MCF 10A (cell line): ENCODE measurements at regions of chr2 and their contacts with region 1.

Region 1: DNA sequence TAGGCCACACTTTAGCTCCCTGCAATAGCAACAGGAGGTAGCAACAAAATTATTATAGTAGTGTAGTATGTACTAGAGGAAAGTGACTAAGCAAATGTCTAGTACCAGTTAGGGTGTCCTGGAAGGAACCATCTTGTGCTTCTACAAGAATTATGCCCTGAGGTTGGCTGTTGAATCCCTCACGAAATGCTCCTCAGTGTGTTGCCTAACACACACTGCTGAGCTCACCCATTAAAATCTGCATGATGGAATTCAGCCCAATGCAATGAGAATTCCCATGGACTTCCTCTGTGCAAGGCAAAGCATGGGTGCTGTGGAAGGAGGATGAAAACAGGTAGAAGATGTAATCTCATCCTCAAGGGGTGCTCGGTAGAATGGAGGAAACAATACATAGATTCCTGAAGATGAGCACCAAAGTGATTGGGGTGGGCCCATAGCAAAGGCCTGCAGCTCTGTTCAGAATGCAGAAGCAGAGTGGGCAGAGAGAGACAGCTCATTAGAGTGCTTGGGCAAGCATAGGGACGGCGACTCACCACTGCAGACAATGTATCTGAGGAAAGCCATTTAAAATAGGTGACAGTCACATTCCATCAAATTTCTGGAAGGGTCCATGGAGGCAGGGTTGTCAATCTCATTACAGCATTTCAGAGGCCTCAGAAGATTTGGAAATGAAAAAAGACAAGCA is 1.2 kb upstream of the UGT1A7 start:
- DNase-seq: peak; percentile 9
- H3K4me3 Mint-ChIP-seq: no peak overlapping the region
- H3K27ac Mint-ChIP-seq: no peak overlapping the region
- H3K4me1 Mint-ChIP-seq: no peaks in the 10 kb centered on the region
- H3K27me3 Mint-ChIP-seq: no peaks in the 10 kb centered on the region
- CTCF ChIP-seq: no peak

Region 2: GRCh38 chr2:233705911-233706506 is 25.5 kb after region 1 on chr2:
- CTCF ChIA-PET with region 1: interaction called, 3 read pairs
- POLR2A ChIA-PET with region 1: interaction called, 15 read pairs
- intact Hi-C with region 1: no loop called
- DNase-seq: peak; percentile 48
- H3K4me3 Mint-ChIP-seq: no peak overlapping the region
- H3K27ac Mint-ChIP-seq: no peak overlapping the region
- H3K4me1 Mint-ChIP-seq: peaks cover 19% of the 10 kb centered on the region
- H3K27me3 Mint-ChIP-seq: no peaks in the 10 kb centered on the region
- CTCF ChIP-seq: no peak